ENCODE measurements at regions of chr1 and their contacts with region 1.

Region 1: DNA sequence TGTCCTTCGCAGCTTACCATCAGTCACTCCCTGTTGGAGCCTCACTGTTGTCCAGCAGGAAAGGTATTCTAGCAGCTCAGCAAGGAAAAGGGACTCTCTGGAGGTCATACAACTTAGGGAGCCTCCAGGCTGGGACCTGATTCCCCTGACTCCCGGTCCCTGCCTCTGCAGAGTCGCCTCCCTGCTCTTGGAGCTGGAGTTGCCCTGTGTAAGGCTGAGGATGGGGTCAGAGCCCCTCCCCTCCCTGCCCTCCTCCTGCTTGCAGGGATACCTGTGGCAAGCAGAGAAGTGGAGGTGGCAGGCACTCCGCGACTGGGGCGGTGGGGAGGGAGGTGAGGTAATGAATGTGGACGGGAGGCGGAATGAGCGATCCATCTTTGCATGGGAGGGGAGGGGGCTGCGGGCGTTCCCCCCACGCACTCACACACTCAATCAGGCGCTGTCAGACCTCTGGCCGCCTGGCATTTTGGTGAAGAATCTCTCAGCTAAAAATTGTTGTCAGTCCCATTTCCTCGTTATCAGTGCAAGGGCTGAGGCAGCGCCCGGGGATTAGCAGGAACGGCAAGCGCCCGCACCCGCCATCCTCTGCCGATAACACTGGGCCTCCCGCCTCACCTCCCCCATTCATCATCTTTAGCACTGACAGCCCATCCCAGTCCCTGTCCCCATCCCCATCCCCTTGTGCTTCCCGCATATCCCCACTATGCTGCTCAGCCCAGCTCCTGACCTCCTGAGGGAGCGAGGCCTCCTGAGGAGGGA is 64.3 kb downstream of the TMEM53 start:
- DNase-seq: no peak
- H3K4me3 ChIP-seq: no peak overlapping the region
- H3K27ac ChIP-seq: no peak overlapping the region
- H3K4me1 ChIP-seq: no peaks in the 10 kb centered on the region
- H3K27me3 ChIP-seq: no peaks in the 10 kb centered on the region
- CTCF ChIP-seq: no peak
- POLR2A ChIP-seq: no peak

Region 2: GRCh38 chr1:44213222-44214112 is 396.5 kb before region 1 on chr1 and contains the start of gene DMAP1:
- intact Hi-C with region 1: no loop called
- DNase-seq: no peak
- H3K4me3 ChIP-seq: peak within 1 kb of the TSS; percentile 86 to 91
- H3K27ac ChIP-seq: peak within 1 kb of the TSS; percentile 83
- H3K4me1 ChIP-seq: peaks cover 27% of the 10 kb centered on the region
- H3K27me3 ChIP-seq: no peaks in the 10 kb centered on the region
- CTCF ChIP-seq: peak in 1 of 3 experiments; percentile 37
- POLR2A ChIP-seq: no peak
- total RNA-seq, gene DMAP1: 52.3 TPM

Region 3: DNA sequence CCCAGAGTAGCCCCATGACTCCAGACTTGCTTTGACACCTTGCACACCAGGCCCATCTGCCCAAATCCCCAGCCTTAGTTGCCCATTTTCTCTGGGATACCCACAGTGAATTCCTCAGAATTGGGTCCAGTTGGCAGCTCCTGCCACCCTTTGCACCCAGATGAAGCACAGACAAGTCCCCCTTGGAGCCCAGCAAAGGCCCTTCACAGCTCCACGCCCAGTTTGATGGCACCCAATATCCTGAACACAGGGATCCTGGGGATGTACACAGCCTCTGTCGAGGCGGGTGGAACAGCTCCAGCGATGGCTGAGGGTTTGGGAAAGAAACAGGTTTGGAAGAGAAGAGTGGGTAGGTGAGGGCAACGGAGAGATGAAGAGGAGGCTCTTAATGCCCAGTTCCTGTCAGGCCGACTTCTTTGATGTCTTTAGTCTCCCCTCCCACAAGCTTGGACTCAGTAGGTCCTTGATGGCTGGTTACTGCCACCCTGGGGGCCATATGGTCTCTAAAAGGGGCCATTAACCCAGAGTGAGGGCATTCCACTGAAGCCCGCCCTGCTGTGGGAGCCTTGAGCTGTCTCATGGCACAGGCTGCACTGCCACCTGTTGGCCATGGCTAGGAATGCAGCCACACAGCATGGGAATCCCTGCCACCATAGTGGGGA is 42.6 kb after region 1 on chr1:
- intact Hi-C with region 1: loop called (anchors 5 kb)
- DNase-seq: no peak
- H3K4me3 ChIP-seq: no peak overlapping the region
- H3K27ac ChIP-seq: no peak overlapping the region
- H3K4me1 ChIP-seq: no peaks in the 10 kb centered on the region
- H3K27me3 ChIP-seq: no peaks in the 10 kb centered on the region
- CTCF ChIP-seq: peak; percentile 89 to 94 (median 91)
- POLR2A ChIP-seq: no peak